ENCODE measurements at regions of chr3 and their contacts with region 1.

Region 1: GRCh38 chr3:2526926-2527325 is 428.3 kb downstream of the CNTN4 start:
- DNase-seq: no peak
- H3K4me3 ChIP-seq: no peak overlapping the region
- H3K27ac ChIP-seq: no peak overlapping the region
- H3K4me1 ChIP-seq: no peaks in the 10 kb centered on the region
- H3K27me3 ChIP-seq: no peaks in the 10 kb centered on the region
- CTCF ChIP-seq: no peak
- EP300 ChIP-seq: no peak
- POLR2A ChIP-seq: no peak

Region 2: GRCh38 chr3:2211568-2211967 is 315.4 kb before region 1 on chr3:
- in situ Hi-C with region 1: no loop called
- intact Hi-C with region 1: no loop called
- DNase-seq: no peak
- H3K4me3 ChIP-seq: no peak overlapping the region
- H3K27ac ChIP-seq: no peak overlapping the region
- H3K4me1 ChIP-seq: no peaks in the 10 kb centered on the region
- H3K27me3 ChIP-seq: no peaks in the 10 kb centered on the region
- CTCF ChIP-seq: no peak
- EP300 ChIP-seq: no peak
- POLR2A ChIP-seq: no peak

Region 3: DNA sequence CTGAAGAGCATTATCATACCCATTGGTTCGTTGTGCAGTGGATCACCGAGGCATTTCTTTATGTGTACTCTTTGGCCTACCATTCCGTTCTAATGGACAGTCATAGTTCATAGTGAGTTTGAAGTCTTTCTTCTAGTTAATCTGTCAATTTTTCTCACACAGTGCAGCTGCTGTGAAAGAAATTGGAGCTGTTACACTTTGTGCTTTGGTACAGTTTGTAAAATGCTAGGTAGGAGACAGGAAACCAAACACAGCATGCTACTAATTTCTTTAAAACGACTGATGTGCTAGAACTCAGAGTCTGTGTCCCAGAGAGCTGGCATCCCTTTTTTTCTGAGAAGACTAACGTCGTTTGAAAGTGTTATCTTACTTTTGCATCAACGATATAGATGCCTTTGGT is 209.4 kb before region 1 on chr3:
- in situ Hi-C with region 1: no loop called
- intact Hi-C with region 1: no loop called
- DNase-seq: no peak
- H3K4me3 ChIP-seq: no peak overlapping the region
- H3K27ac ChIP-seq: no peak overlapping the region
- H3K4me1 ChIP-seq: no peaks in the 10 kb centered on the region
- H3K27me3 ChIP-seq: no peaks in the 10 kb centered on the region
- CTCF ChIP-seq: no peak
- EP300 ChIP-seq: no peak
- POLR2A ChIP-seq: no peak

Region 4: DNA sequence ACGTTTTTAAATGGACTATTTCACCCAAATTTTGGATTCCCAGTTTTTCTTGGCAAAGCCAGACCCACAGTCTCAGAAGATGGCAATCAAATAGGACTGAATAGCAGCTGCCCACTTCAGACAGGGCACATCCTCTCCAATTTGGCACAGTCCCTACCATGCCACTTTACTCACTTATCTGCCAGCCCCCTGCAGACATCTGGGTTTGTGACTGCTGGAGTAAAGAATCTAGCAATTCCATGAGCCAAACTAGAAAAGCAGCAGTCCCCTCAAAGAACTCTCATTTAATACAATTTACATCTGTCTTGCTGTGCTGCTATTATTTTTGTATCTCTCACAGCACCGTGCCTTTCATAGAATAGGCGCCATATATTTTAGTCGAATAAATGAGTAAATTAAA is 1256.3 kb after region 1 on chr3:
- in situ Hi-C with region 1: no loop called
- intact Hi-C with region 1: loop called (anchors 5 kb)
- DNase-seq: no peak
- H3K4me3 ChIP-seq: no peak overlapping the region
- H3K27ac ChIP-seq: no peak overlapping the region
- H3K4me1 ChIP-seq: no peaks in the 10 kb centered on the region
- H3K27me3 ChIP-seq: no peaks in the 10 kb centered on the region
- CTCF ChIP-seq: no peak
- EP300 ChIP-seq: no peak
- POLR2A ChIP-seq: no peak